ENCODE measurements at regions of chr12 and their contacts with region 1.

Region 1: DNA sequence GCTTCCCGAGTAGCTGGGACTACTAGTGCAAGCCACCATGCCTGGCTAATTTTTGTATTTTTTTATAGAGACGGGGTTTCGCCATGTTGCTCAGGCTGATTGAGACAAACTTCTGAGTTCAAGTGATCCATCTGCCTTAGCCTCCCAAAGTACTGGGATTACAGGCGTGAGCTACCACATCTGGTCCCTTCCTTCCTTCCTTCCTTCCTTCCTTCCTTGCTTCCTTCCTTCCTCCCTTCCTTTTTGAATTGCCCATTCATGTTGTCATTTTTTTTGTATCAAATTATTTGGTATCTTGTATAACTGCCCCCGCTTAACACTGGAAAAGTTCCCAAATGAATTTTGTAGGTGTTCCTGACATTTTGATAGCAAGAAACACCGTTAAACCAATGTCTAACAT is 11.7 kb downstream of the RAD9B start:
- DNase-seq: no peak
- H3K4me3 ChIP-seq: no peak overlapping the region
- H3K27ac ChIP-seq: no peak overlapping the region
- H3K4me1 ChIP-seq: no peaks in the 10 kb centered on the region
- H3K27me3 ChIP-seq: no peaks in the 10 kb centered on the region
- CTCF ChIP-seq: no peak
- POLR2A ChIP-seq: no peak

Region 2: GRCh38 chr12:110563702-110564640 is 50.1 kb after region 1 on chr12:
- intact Hi-C with region 1: no loop called
- DNase-seq: no peak
- H3K4me3 ChIP-seq: no peak overlapping the region
- H3K27ac ChIP-seq: peak overlapping the region; percentile 74 to 78
- H3K4me1 ChIP-seq: peaks cover 5 to 10% of the 10 kb centered on the region in 2 donors
- H3K27me3 ChIP-seq: no peaks in the 10 kb centered on the region
- CTCF ChIP-seq: no peak
- POLR2A ChIP-seq: no peak

Region 3: GRCh38 chr12:110600254-110600653 is 86.4 kb after region 1 on chr12:
- intact Hi-C with region 1: loop called (anchors 5 kb)
- DNase-seq: no peak
- H3K4me3 ChIP-seq: no peak overlapping the region
- H3K27ac ChIP-seq: no peak overlapping the region
- H3K4me1 ChIP-seq: no peaks in the 10 kb centered on the region
- H3K27me3 ChIP-seq: no peaks in the 10 kb centered on the region
- CTCF ChIP-seq: peak; percentile 50 to 80 (median 64)
- POLR2A ChIP-seq: no peak